ENCODE measurements at regions of chr4 and their contacts with region 1.

Region 1: GRCh38 chr4:13654158-13654797 is 26.8 kb upstream of the BOD1L1 start:
- DNase-seq: peak; percentile 61 to 82 (median 64)
- H3K4me3 ChIP-seq: peak overlapping the region; percentile 88
- H3K4me3 Mint-ChIP-seq: peak overlapping the region; percentile 86 to 97 (median 89)
- H3K27ac ChIP-seq: no peak overlapping the region
- H3K27ac Mint-ChIP-seq: peak overlapping the region in 3 of 8 donors; percentile 12 to 43 (median 12)
- H3K4me1 ChIP-seq: no peaks in the 10 kb centered on the region
- H3K4me1 Mint-ChIP-seq: peaks cover 10 to 24% (median 20%) of the 10 kb centered on the region in 3 donors
- H3K27me3 ChIP-seq: peaks cover 3% of the 10 kb centered on the region
- H3K27me3 Mint-ChIP-seq: peaks cover 6 to 17% of the 10 kb centered on the region in 2 donors

Region 2: DNA sequence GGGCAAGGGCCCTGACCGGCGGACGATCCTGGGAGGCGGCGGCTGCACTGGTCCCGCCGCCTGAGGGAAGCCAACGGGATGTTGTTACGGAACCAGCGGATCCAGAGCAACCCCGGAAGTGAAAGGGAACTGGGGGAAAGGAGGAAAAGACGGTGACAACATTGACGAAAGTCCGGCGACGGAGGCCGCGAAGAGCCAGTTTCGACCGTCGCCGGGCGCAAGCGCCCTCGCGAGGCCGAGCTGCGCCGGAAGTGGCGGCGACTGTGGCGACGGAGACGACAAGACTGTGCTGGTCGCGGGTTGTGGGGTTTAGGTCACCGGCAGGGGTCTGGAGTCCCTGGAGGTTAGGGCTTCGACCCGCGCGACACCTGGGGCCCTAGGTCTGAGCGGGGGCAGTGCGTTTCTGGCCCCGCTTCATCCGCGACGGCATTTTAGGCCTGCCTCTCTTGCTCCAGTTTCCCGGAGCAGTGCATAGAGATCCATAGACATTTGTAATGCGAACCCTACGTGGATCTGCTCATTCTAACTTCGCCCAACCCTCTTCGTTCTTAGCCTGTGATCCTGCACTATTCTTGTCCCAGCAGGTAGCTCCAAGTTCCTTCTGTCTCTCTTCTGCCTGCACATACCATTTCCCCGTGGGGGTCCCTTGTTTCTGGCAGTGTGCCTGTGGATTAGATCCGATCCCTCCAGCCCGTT is 26.5 kb before region 1 on chr4 and contains the start of gene BOD1L1:
- CTCF ChIA-PET with region 1: interaction called, 26 read pairs
- POLR2A ChIA-PET with region 1: interaction called, 9 read pairs
- DNase-seq: peak; percentile 61 to 82 (median 79)
- H3K4me3 ChIP-seq: peak within 1 kb of the TSS; percentile 82
- H3K4me3 Mint-ChIP-seq: peak within 1 kb of the TSS; percentile 93 to 98 (median 96)
- H3K27ac ChIP-seq: peak within 1 kb of the TSS; percentile 90
- H3K27ac Mint-ChIP-seq: peak within 1 kb of the TSS; percentile 94 to 100 (median 98)
- H3K4me1 ChIP-seq: peaks cover 33% of the 10 kb centered on the region
- H3K4me1 Mint-ChIP-seq: peaks cover 49 to 58% (median 58%) of the 10 kb centered on the region in 3 donors
- H3K27me3 ChIP-seq: no peaks in the 10 kb centered on the region
- H3K27me3 Mint-ChIP-seq: peaks cover 0 to 7% of the 10 kb centered on the region in 2 donors
- total RNA-seq, gene BOD1L1: 35.1 to 37.1 TPM

Region 3: DNA sequence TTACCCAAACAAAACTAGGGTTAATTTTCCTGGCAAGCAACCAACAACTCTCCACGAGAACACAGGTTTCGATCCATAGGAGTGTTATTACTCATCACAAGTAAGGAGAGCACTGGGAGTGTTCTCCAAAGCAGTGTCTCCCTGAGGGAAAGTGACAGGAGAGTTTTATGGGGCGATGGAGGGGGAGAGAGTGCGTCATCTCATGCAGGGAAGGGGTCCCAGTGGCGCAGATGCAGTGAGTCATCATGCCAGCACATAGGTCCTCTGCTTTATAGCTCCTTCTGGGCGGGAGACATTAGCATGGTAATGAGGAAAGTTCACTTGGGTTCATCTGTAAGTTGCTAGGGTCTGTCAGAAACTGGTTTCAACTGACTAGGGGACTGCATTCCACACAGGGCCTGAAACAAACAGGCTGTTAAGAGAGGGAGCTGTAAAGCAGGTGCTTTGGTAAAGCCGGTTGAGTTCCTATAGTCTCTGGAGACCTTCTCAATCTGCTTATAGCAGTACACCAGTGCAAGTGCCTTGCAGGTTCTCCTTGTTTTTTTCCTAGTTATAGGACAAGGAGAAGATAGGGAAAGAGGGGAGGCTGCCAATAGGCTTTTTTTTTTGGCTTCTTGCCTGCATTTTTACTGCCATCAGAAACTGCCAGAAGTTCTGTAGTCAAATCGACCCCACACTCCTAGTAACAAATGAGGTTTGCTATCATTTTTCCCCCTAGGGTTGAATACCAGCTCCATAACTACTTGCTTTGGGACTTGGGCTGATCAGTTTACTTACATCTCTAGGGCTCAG is 13.9 kb before region 1 on chr4:
- CTCF ChIA-PET with region 1: interaction called, 65 read pairs
- POLR2A ChIA-PET with region 1: no interaction called
- DNase-seq: no peak
- H3K4me3 ChIP-seq: no peak overlapping the region
- H3K4me3 Mint-ChIP-seq: no peak overlapping the region
- H3K27ac ChIP-seq: no peak overlapping the region
- H3K27ac Mint-ChIP-seq: no peak overlapping the region
- H3K4me1 ChIP-seq: no peaks in the 10 kb centered on the region
- H3K4me1 Mint-ChIP-seq: no peaks in the 10 kb centered on the region
- H3K27me3 ChIP-seq: peaks cover 10% of the 10 kb centered on the region
- H3K27me3 Mint-ChIP-seq: peaks cover 26 to 75% of the 10 kb centered on the region in 2 donors

Measured in CD8-positive, alpha-beta memory T cell (primary cell).